RWPE1 (cell line): ENCODE measurements at regions of chr2 and their contacts with region 1.

Region 1: GRCh38 chr2:9565436-9566153 is 10.0 kb upstream of the ADAM17 start:
- DNase-seq: peak; percentile 78
- H3K27ac ChIP-seq: peak overlapping the region; percentile 90
- CTCF ChIP-seq: no peak

Region 2: GRCh38 chr2:9356292-9356691 is 209.3 kb before region 1 on chr2:
- CTCF ChIA-PET with region 1: no interaction called
- POLR2A ChIA-PET with region 1: no interaction called
- DNase-seq: no peak
- H3K27ac ChIP-seq: no peak overlapping the region
- CTCF ChIP-seq: no peak

Region 3: DNA sequence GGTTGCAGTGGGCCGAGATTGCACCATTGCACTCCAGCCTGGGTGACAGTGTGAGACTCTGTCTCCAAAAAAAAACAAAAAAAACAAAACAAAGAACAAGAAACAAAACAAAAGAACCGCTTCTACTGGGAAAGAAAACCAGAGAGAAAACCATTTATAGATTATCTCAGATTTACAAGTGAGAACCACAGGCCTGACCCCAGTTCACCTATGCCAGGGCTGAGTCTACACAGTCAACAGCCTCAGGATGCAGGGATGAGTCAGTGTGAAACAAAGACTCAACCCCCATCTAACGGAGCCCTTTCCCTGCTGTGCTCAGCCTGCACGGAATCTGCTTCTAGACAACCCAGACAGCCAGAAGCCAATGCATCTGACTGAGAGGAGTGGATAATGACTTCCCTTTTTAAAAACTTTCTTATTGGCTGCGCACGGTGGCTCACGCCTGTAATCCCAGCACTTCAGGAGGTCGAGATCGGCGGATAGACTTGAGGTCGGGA is 90.7 kb after region 1 on chr2:
- CTCF ChIA-PET with region 1: no interaction called
- POLR2A ChIA-PET with region 1: no interaction called
- DNase-seq: peak; percentile 92
- H3K27ac ChIP-seq: peak overlapping the region; percentile 42
- CTCF ChIP-seq: no peak

Region 4: GRCh38 chr2:10566018-10566417 is 1000.4 kb after region 1 on chr2:
- CTCF ChIA-PET with region 1: no interaction called
- POLR2A ChIA-PET with region 1: no interaction called
- DNase-seq: no peak
- H3K27ac ChIP-seq: no peak overlapping the region
- CTCF ChIP-seq: no peak

Region 5: GRCh38 chr2:10912076-10912731 is 1346.6 kb after region 1 on chr2:
- CTCF ChIA-PET with region 1: interaction called, 10 read pairs
- POLR2A ChIA-PET with region 1: no interaction called
- DNase-seq: no peak
- H3K27ac ChIP-seq: no peak overlapping the region
- CTCF ChIP-seq: no peak